CD4-positive, alpha-beta memory T cell (primary cell): ENCODE measurements at regions of chr3 and their contacts with region 1.

Region 1: DNA sequence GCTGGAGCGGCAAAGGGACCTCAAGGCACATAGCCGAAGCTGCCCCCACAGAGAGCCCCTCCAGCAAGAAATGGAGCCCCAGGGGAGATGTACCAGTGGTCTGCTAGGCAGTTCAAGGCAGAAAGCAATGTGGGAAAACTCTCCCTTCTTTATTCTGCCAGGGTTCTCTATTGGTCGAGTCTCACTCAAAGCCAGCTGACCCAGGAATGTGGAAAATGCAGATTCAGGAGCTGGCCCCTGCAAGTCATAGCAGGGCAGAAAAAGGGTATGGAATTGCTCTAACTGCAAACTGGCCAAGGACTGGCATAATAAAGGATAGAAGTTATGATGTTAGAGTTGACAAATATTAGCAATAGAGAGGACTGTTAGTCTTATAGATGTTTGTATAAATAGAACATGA is 4.0 kb upstream of the TOPAZ1 start:
- DNase-seq: no peak
- H3K4me3 ChIP-seq: no peak overlapping the region
- H3K4me3 Mint-ChIP-seq: no peak overlapping the region
- H3K27ac ChIP-seq: no peak overlapping the region
- H3K27ac Mint-ChIP-seq: no peak overlapping the region
- H3K4me1 ChIP-seq: peaks cover 5% of the 10 kb centered on the region
- H3K4me1 Mint-ChIP-seq: peaks cover 6 to 7% (median 6%) of the 10 kb centered on the region in 4 donors
- H3K27me3 ChIP-seq: no peaks in the 10 kb centered on the region
- H3K27me3 Mint-ChIP-seq: peaks cover 4 to 9% of the 10 kb centered on the region in 2 donors

Region 2: DNA sequence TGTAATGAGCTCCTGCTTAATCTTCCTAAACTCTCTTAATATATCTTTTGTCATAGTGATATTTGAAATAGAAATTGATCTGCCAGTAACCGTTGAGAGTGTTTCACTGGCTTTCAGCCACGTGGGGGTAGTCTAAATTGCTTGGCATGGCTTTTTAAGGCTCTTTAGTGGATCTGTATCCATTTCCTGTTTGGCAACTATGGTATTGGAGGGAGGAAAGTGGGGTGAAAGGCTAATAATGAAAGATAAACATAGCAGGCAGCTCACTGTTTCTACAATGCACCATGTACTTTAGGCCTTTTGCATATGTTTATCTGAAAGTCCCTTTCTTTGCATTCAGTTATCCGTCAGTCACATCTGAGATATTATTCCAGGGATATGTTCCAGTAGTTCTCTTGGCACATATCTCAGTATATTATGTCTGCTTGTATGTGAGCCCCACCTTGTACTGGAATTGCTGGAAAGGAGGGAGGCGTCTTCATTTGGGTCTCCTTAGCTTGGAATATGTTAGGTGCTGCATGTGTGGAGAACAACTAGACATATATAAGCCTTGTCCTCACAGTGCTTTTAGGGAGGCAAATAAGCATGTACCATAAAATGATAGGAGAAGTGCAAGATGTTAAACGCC is 14.8 kb after region 1 on chr3:
- CTCF ChIA-PET with region 1: interaction called, 10 read pairs
- POLR2A ChIA-PET with region 1: no interaction called
- intact Hi-C with region 1: no loop called
- DNase-seq: no peak
- H3K4me3 ChIP-seq: no peak overlapping the region
- H3K4me3 Mint-ChIP-seq: no peak overlapping the region
- H3K27ac ChIP-seq: no peak overlapping the region
- H3K27ac Mint-ChIP-seq: no peak overlapping the region
- H3K4me1 ChIP-seq: no peaks in the 10 kb centered on the region
- H3K4me1 Mint-ChIP-seq: peaks cover 0 to 1% (median 0%) of the 10 kb centered on the region in 4 donors
- H3K27me3 ChIP-seq: no peaks in the 10 kb centered on the region
- H3K27me3 Mint-ChIP-seq: peaks cover 10 to 11% of the 10 kb centered on the region in 2 donors